ENCODE measurements at regions of chr1 and their contacts with region 1.

Region 1: DNA sequence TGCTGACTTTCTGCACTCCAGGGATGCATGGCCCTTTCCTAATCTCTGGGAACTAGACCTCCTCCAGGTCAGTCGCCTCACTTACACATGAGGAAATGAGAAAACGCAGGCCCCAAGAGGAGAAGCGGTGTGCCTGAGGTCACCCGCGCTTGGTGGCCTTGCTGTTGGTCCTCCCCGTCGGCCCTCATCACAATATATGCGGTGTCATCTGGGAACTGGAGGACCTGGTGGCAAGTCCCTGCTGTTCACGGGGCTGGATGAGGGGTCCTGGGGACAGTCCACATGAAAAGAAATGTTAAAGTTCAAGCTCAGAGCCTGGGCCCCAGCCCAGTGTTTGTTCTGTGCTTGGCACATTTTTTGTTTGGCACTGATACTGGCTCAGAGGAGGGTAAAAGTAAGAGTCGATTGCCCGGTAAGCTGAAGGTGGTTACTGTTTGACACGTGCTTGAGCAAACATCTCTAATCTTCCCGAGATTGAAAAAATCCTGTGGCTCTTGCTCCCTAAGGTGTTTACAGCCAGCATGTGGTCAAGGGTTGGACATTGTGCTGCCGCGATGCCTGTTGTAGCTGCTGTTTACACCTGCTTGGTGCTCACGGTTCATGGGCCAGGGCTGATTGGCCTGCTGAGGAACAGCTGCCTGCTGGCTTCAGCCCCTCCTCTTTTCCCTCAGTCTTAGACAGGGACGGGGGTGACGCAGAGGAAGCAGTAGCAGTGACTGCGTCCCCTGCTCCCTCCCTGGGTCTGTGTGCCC is 5.2 kb downstream of the COQ8A start:
- DNase-seq: peak; percentile 85
- ATAC-seq: peak; percentile 85
- H3K4me3 ChIP-seq: peak overlapping the region; percentile 40 to 74 (median 48)
- H3K27ac ChIP-seq: peak overlapping the region; percentile 94
- H3K4me1 ChIP-seq: peaks cover 67% of the 10 kb centered on the region
- H3K27me3 ChIP-seq: no peaks in the 10 kb centered on the region; a peak in 1 of 5 replicates
- CTCF ChIP-seq: no peak
- EP300 ChIP-seq: no peak; a peak in 1 of 4 replicates
- POLR2A ChIP-seq: peak in 1 of 2 experiments; percentile 37; a peak in 2 of 4 replicates
- RAD21 ChIP-seq: no peak

Region 2: GRCh38 chr1:226723657-226724532 is 221.4 kb before region 1 on chr1:
- CTCF ChIA-PET with region 1: no interaction called
- POLR2A ChIA-PET with region 1: no interaction called
- in situ Hi-C with region 1: no loop called
- intact Hi-C with region 1: no loop called
- DNase-seq: no peak
- ATAC-seq: no peak
- H3K4me3 ChIP-seq: no peak overlapping the region
- H3K27ac ChIP-seq: no peak overlapping the region
- H3K4me1 ChIP-seq: no peaks in the 10 kb centered on the region
- H3K27me3 ChIP-seq: peaks cover 2 to 33% of the 10 kb centered on the region in 2 experiments; a peak in 4 of 5 replicates
- CTCF ChIP-seq: no peak
- EP300 ChIP-seq: no peak
- POLR2A ChIP-seq: no peak
- RAD21 ChIP-seq: no peak

Region 3: DNA sequence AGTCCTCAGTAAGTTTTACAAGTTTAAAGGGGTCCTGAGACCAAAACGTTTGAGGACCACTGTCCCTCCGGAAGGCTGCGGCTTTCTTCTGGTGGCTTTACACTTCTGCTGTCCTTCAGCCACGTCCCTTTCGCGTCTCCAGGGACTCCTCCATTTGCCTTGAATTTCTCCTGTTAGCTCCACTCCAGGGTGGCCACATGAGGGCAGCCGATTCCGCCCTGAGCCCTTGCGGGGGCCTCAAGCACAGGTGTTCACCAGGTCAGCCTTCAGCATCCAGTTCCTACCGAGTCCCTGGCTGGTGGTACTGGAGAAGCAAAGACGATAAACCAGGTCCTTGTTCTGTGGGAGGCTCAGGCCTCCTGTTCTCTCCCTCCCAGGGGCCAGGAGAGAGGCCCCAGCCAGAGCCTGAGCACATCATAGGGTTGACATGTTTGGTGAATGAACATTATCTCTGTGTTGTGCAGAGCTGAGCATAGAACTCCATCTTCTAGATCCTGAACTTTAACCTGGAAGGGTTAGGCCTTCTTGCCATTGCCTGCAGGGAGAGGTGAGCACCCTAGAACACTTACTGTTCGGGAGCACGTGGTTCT is 32.6 kb before region 1 on chr1:
- CTCF ChIA-PET with region 1: no interaction called
- POLR2A ChIA-PET with region 1: interaction called, 3 read pairs
- in situ Hi-C with region 1: no loop called
- intact Hi-C with region 1: loop called (anchors 2 kb)
- DNase-seq: peak; percentile 76
- ATAC-seq: peak; percentile 100
- H3K4me3 ChIP-seq: no peak overlapping the region
- H3K27ac ChIP-seq: no peak overlapping the region
- H3K4me1 ChIP-seq: peaks cover 7% of the 10 kb centered on the region
- H3K27me3 ChIP-seq: no peaks in the 10 kb centered on the region
- CTCF ChIP-seq: peak; percentile 100
- EP300 ChIP-seq: no peak
- POLR2A ChIP-seq: no peak
- RAD21 ChIP-seq: peak; percentile 93

Region 4: DNA sequence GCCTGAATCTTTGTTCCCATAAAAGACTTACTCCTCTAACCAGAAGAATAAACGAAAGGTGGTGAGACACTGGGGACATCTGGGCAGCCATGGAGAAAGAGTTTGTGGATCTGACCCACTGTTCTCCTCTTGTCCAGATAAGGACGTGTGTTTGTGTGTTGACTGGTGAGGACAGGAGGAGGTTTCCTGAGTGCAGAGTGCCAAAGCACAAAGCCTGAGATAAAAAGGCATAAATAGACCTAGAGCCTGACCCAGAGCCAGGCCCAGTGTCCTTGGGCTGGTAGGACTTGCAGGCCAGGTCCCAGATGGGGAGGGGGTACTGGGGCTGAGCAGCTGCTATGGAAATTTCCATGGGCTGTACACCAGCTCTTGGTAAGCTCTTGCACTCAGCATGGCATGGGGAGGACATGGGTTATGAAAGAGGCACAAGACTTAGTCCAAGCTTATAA is 24.8 kb before region 1 on chr1:
- CTCF ChIA-PET with region 1: no interaction called
- POLR2A ChIA-PET with region 1: interaction called, 35 read pairs
- in situ Hi-C with region 1: no loop called
- intact Hi-C with region 1: loop called (anchors 2 kb)
- DNase-seq: peak; percentile 79
- ATAC-seq: peak; percentile 98
- H3K4me3 ChIP-seq: no peak overlapping the region
- H3K27ac ChIP-seq: peak overlapping the region; percentile 64
- H3K4me1 ChIP-seq: peaks cover 30% of the 10 kb centered on the region
- H3K27me3 ChIP-seq: no peaks in the 10 kb centered on the region
- CTCF ChIP-seq: no peak
- EP300 ChIP-seq: peak in 1 of 2 experiments; percentile 77; a peak in 1 of 4 replicates
- POLR2A ChIP-seq: no peak
- RAD21 ChIP-seq: no peak

Region 5: DNA sequence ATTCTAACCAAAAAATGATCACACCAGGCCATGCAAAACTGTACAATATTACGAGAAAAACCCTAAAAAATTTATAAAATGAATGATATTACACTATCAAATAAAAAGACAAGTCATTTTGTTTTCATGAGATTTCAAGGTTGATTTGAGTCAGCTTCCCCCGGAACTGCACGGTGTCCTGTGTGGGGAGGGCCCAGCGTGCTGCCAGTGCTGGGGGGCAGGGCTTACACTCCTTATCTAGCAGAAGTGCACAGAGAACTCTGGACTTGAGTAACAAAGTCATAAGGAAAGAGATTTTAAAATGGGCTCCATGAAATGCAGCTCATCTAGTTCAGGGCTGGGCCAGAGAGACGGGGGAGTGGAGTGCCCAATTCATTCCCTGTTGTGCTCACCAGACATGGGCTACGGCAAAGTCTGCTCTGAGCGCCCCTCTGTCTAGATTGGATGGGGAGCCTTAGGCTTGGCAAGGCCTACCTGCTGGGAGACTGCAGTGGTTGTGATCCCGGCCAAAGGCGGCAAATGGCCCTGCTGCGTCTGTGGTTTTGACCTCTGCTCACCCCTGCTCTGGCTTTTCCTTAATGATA is 44.9 kb after region 1 on chr1:
- CTCF ChIA-PET with region 1: no interaction called
- POLR2A ChIA-PET with region 1: interaction called, 6 read pairs
- in situ Hi-C with region 1: no loop called
- intact Hi-C with region 1: loop called (anchors 5 kb)
- DNase-seq: peak; percentile 28
- ATAC-seq: peak; percentile 30
- H3K4me3 ChIP-seq: no peak overlapping the region
- H3K27ac ChIP-seq: peak overlapping the region; percentile 66
- H3K4me1 ChIP-seq: peaks cover 61% of the 10 kb centered on the region
- H3K27me3 ChIP-seq: no peaks in the 10 kb centered on the region
- CTCF ChIP-seq: no peak
- EP300 ChIP-seq: no peak
- POLR2A ChIP-seq: no peak
- RAD21 ChIP-seq: no peak

Region 6: GRCh38 chr1:227016990-227017389 is 71.7 kb after region 1 on chr1:
- CTCF ChIA-PET with region 1: no interaction called
- POLR2A ChIA-PET with region 1: no interaction called
- in situ Hi-C with region 1: no loop called
- intact Hi-C with region 1: loop called (anchors 2 kb)
- DNase-seq: no peak
- ATAC-seq: no peak
- H3K4me3 ChIP-seq: no peak overlapping the region
- H3K27ac ChIP-seq: no peak overlapping the region
- H3K4me1 ChIP-seq: peaks cover 10% of the 10 kb centered on the region; the same call in 1 of the 2 replicates
- H3K27me3 ChIP-seq: no peaks in the 10 kb centered on the region
- CTCF ChIP-seq: no peak
- EP300 ChIP-seq: no peak
- POLR2A ChIP-seq: no peak
- RAD21 ChIP-seq: no peak